PC-9 (cell line): ENCODE measurements at regions of chr15 and their contacts with region 1.

Region 1: GRCh38 chr15:71294886-71295638 is 179.8 kb downstream of the THSD4 start:
- DNase-seq: peak; percentile 78 to 99
- H3K4me3 ChIP-seq: 0 out of 2 replicates have a peak overlapping the region, but pooled peaks have one; percentile 21
- H3K27ac ChIP-seq: peak overlapping the region; percentile 100
- H3K4me1 ChIP-seq: peaks cover 70% of the 10 kb centered on the region
- H3K27me3 ChIP-seq: no peaks in the 10 kb centered on the region
- CTCF ChIP-seq: no peak

Region 2: DNA sequence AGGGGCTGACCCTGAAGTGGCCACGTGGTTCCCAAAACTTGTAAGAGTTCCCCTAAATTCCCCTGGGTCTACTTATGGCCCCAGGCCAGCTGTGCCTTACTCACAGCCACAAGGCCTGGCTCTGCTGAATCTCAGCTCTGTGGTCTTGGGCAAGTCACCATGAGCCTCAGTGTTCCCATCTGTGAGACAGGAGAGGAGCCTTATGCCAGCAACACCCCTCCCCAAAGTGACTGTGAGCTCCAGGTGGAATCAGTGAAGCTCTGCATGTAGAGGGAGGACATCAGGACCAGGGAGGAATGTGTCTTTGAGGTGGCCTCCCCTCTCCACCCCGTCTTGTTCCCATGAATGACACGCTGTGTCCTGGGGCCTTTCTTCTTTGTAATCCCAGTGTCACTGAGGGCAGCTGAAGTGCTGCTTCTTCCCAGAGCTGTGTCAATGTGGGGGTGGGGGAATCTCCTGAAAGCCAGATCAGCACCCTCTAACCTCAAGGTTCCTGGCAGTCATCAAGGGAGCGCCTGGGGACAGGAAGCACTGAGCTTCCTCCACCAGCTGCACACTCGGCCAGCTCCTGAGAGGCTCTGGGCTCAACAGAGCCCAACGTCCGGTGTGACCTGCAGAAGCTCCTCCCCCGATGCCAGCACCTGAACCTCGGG is 790.6 kb before region 1 on chr15:
- CTCF ChIA-PET with region 1: no interaction called
- POLR2A ChIA-PET with region 1: no interaction called
- intact Hi-C with region 1: loop called (anchors 5 kb)
- DNase-seq: peak; percentile 72 to 86
- H3K4me3 ChIP-seq: no peak overlapping the region
- H3K27ac ChIP-seq: peak overlapping the region; percentile 99
- H3K4me1 ChIP-seq: peaks cover 59% of the 10 kb centered on the region
- H3K27me3 ChIP-seq: no peaks in the 10 kb centered on the region
- CTCF ChIP-seq: no peak

Region 3: GRCh38 chr15:71079208-71080021 is 215.6 kb before region 1 on chr15:
- CTCF ChIA-PET with region 1: no interaction called
- POLR2A ChIA-PET with region 1: no interaction called
- intact Hi-C with region 1: loop called (anchors 1 kb)
- DNase-seq: peak; percentile 73 to 93
- H3K4me3 ChIP-seq: no peak overlapping the region
- H3K27ac ChIP-seq: peak overlapping the region; percentile 73
- H3K4me1 ChIP-seq: peaks cover 26% of the 10 kb centered on the region
- H3K27me3 ChIP-seq: no peaks in the 10 kb centered on the region
- CTCF ChIP-seq: no peak

Region 4: DNA sequence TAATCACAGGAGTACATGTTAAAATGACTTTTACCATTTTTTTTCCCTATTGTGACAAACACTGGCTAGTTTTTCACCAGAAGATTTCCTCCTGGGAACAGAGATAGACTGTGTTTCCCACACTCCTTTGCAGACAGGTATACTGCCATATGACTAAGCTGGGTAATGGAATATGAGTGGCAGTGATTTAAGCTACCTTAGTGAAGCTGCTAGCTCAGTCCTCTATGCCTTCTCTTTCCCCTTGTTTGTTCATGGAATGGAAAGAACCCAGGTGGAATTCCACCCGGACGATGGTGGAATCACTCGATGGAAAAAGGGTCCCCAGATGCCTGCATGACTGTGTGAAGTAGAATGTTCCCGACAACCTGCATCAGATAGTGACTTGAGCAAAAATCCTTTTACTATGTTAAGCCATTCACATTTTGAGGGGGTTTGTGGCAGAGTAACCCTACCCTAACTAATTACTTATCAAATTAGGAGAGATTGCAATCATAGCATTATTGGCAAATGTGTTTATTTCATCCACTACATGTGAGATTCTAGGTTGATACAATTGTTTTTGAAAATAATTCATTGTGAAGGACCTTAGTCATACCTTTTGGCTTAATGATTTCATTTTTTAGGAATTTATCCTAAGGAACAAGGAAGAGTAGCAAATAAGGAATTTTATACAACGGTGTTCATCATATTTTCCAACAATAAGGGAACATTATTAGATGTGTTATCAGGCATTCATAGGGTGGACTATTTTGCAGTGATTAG is 163.3 kb before region 1 on chr15:
- CTCF ChIA-PET with region 1: no interaction called
- POLR2A ChIA-PET with region 1: no interaction called
- intact Hi-C with region 1: loop called (anchors 1 kb)
- DNase-seq: peak; percentile 25 to 77
- H3K4me3 ChIP-seq: no peak overlapping the region
- H3K27ac ChIP-seq: peak overlapping the region; percentile 88
- H3K4me1 ChIP-seq: peaks cover 49% of the 10 kb centered on the region
- H3K27me3 ChIP-seq: no peaks in the 10 kb centered on the region
- CTCF ChIP-seq: no peak

Region 5: GRCh38 chr15:71278989-71279756 is 15.9 kb before region 1 on chr15:
- CTCF ChIA-PET with region 1: no interaction called
- POLR2A ChIA-PET with region 1: interaction called, 4 read pairs
- intact Hi-C with region 1: loop called (anchors 1 kb)
- DNase-seq: peak; percentile 77 to 96
- H3K4me3 ChIP-seq: 0 out of 2 replicates have a peak overlapping the region, but pooled peaks have one; percentile 10
- H3K27ac ChIP-seq: peak overlapping the region; percentile 99
- H3K4me1 ChIP-seq: peaks cover 75% of the 10 kb centered on the region
- H3K27me3 ChIP-seq: no peaks in the 10 kb centered on the region
- CTCF ChIP-seq: no peak

Region 6: GRCh38 chr15:71348628-71349027 is 53.6 kb after region 1 on chr15:
- CTCF ChIA-PET with region 1: no interaction called
- POLR2A ChIA-PET with region 1: interaction called, 3 read pairs
- intact Hi-C with region 1: loop called (anchors 1 kb)
- DNase-seq: peak; percentile 17 to 84
- H3K4me3 ChIP-seq: no peak overlapping the region
- H3K27ac ChIP-seq: peak overlapping the region; percentile 70
- H3K4me1 ChIP-seq: peaks cover 27% of the 10 kb centered on the region
- H3K27me3 ChIP-seq: no peaks in the 10 kb centered on the region
- CTCF ChIP-seq: no peak

Region 7: DNA sequence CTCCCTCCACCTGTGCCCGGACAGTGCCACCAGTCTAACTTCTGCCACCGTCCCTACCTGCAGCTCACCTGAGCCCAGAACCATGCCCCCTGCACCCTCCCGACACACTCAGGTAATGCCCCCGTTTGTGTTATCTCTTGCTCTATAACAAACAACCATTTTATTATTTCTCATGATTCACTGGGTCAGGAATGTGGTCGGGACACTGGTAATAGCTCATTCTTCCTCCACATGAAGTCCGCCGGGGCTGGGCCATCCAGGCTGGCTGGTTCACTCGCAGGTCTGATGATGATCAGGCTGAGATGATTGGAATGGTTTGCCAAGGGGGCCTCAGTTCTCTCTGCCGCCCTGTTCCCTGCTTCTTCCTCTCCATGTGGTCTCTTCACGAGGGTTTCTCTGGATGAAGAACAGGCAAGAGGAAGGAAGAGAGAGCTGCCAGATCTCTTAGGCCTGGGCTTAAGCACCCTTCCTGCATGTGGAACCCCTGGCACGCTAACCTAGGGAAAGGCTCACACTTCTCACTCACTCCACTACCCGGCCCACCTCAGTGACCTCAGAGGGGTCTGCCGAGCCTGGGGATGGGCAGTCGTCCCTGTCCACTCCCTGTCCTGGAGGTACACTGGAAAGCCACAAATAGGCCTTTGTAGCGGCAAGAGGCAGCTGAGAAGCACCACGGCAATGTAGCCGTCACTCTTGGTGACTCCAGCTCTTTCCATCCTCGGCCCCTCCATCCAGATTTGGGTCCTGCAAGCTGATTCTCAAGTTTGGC is 495.2 kb after region 1 on chr15:
- CTCF ChIA-PET with region 1: no interaction called
- POLR2A ChIA-PET with region 1: no interaction called
- intact Hi-C with region 1: loop called (anchors 2 kb)
- DNase-seq: peak; percentile 79 to 88
- H3K4me3 ChIP-seq: no peak overlapping the region
- H3K27ac ChIP-seq: peak overlapping the region; percentile 95
- H3K4me1 ChIP-seq: peaks cover 46% of the 10 kb centered on the region
- H3K27me3 ChIP-seq: no peaks in the 10 kb centered on the region
- CTCF ChIP-seq: no peak